ENCODE measurements at regions of chr4 and their contacts with region 1.

Region 1: DNA sequence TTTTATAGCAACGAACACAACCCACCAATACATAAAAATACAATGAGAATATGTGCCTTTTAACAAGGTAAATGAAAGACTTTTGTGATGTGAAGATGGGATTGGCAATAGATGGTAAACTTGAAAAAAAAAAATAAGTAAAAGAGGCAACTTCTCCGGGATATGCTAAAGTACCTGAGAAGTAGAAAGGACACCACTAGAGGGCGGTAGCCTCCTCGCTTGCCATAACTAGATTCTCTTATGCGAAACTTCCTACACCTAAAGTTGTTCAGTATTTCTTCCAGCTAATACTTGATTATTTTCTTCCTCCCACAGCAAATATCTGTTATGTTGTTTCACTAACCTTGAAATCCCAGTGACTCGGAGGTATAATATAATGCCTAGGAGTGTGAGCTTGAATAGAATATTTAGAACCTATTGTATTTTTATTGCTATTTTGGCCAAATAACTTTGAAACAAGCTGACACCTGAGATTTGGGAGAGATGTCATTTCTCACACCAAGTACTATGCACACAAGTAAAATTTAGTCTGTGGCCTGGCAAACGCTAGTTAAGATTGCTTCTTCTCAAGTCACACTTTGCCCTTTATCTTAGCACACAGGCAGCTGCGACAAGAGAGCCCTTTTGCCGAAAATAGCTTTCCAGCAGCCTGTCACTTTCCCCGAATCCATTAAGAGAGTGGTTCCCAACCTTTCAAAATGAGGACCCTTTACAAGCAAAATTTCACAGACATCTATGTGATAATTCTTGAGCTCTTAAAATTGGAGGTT is 44.9 kb upstream of the PDLIM5 start:
- DNase-seq: peak in 4 of 5 donors; percentile 68 to 79 (median 74)
- ATAC-seq: peak; percentile 31 to 48 (median 42)
- H3K4me3 ChIP-seq: peak overlapping the region in 4 of 12 donors; percentile 4 to 25 (median 16)
- H3K27ac ChIP-seq: peak overlapping the region; percentile 65 to 94 (median 83)
- H3K4me1 ChIP-seq: peaks cover 0 to 56% (median 15%) of the 10 kb centered on the region in 12 donors
- H3K27me3 ChIP-seq: no peaks in the 10 kb centered on the region
- CTCF ChIP-seq: peak; percentile 84 to 96 (median 90)
- POLR2A ChIP-seq: no peak

Region 2: DNA sequence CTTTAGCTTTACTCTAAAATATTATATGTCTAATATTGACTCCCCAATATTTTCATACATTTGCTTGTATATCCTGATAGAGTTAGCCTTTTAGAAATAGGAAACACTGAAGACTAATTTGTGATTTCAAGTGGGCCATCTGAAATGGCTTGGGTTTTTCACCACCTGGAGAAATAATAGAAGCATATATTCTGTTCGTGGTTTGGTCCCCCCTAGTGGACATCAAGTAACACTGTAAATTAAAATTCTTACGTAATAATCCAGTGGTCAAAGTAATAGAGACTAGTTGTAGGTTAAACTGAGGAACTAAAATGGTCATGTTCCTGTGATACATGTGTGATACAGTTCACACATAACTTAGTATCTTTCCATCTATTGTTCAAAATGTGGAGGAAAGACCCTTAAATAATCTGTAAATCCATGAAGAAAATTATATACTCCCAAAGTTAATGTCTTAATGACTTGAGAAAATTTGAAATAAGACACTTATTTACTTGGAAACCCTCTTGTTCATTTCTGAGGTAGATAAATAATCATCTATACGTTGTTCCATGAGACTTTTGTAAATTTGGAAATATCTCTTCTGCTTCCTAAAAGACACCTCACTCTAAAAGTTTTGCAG is 279.0 kb before region 1 on chr4:
- intact Hi-C with region 1: no loop called
- DNase-seq: no peak
- ATAC-seq: no peak
- H3K4me3 ChIP-seq: no peak overlapping the region
- H3K27ac ChIP-seq: no peak overlapping the region
- H3K4me1 ChIP-seq: no peaks in the 10 kb centered on the region
- H3K27me3 ChIP-seq: no peaks in the 10 kb centered on the region
- CTCF ChIP-seq: peak in 11 of 12 donors; percentile 32 to 66 (median 49)
- POLR2A ChIP-seq: no peak

Region 3: GRCh38 chr4:94436512-94436911 is 29.7 kb after region 1 on chr4:
- intact Hi-C with region 1: no loop called
- DNase-seq: no peak
- ATAC-seq: no peak
- H3K4me3 ChIP-seq: no peak overlapping the region
- H3K27ac ChIP-seq: no peak overlapping the region
- H3K4me1 ChIP-seq: peaks cover 0 to 4% (median 0%) of the 10 kb centered on the region in 12 donors
- H3K27me3 ChIP-seq: no peaks in the 10 kb centered on the region
- CTCF ChIP-seq: no peak
- POLR2A ChIP-seq: no peak

Region 4: GRCh38 chr4:94457692-94458106 is 50.8 kb after region 1 on chr4:
- intact Hi-C with region 1: loop called in 8 of 10 experiments (anchors 2 to 5 kb)
- DNase-seq: peak in 4 of 5 donors; percentile 50 to 70 (median 56)
- ATAC-seq: peak; percentile 80 to 92 (median 90)
- H3K4me3 ChIP-seq: peak overlapping the region in 9 of 12 donors; percentile 78 to 99 (median 95)
- H3K27ac ChIP-seq: peak overlapping the region; percentile 41 to 100 (median 98)
- H3K4me1 ChIP-seq: peaks cover 0 to 91% (median 36%) of the 10 kb centered on the region in 12 donors
- H3K27me3 ChIP-seq: no peaks in the 10 kb centered on the region
- CTCF ChIP-seq: no peak
- POLR2A ChIP-seq: peak in 1 of 2 donors; percentile 25

Region 5: GRCh38 chr4:94525993-94526728 is 119.3 kb after region 1 on chr4:
- intact Hi-C with region 1: loop called in 1 of 10 experiments (anchors 10 kb)
- DNase-seq: no peak
- ATAC-seq: peak in 1 of 4 donors; percentile 13
- H3K4me3 ChIP-seq: peak overlapping the region in 5 of 12 donors; percentile 0 to 30 (median 8)
- H3K27ac ChIP-seq: peak overlapping the region in 11 of 12 donors; percentile 25 to 77 (median 67)
- H3K4me1 ChIP-seq: peaks cover 3 to 99% (median 82%) of the 10 kb centered on the region in 12 donors
- H3K27me3 ChIP-seq: no peaks in the 10 kb centered on the region
- CTCF ChIP-seq: no peak
- POLR2A ChIP-seq: no peak

Region 6: GRCh38 chr4:94583914-94584641 is 177.2 kb after region 1 on chr4:
- intact Hi-C with region 1: loop called in 1 of 10 experiments (anchors 5 kb)
- DNase-seq: no peak
- ATAC-seq: peak in 2 of 4 donors; percentile 33 to 38
- H3K4me3 ChIP-seq: no peak overlapping the region
- H3K27ac ChIP-seq: peak overlapping the region in 4 of 12 donors; percentile 1 to 37 (median 32)
- H3K4me1 ChIP-seq: peaks cover 0 to 46% (median 16%) of the 10 kb centered on the region in 12 donors
- H3K27me3 ChIP-seq: no peaks in the 10 kb centered on the region
- CTCF ChIP-seq: no peak
- POLR2A ChIP-seq: no peak

Region 7: DNA sequence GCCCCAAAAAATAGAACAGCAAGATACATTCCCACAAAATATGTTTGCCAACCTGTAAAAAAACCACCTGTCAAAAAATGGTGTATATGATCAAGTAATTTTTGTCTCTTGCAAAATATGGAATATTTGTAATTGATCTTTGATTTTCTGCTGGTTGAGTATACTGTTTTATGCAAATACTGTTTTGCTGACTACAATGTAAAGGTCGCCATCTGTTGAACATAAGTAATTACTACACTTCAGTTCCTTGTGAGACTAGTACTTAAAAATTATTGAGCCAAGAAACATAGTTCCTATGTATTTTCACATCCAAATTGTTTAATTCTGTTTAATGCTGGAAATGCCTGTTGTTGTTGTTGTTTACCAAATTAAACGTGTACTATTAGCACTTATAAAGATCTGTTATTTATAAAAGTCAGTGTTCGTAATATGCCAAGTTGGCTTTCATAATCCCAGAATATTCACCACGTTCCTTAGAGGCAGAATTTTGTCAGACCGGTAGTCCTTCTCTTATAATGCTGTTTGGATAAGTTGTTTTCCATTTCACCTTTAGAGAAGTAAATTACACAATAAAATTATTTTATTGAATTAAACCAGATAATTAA is 189.1 kb after region 1 on chr4:
- intact Hi-C with region 1: loop called (anchors 1 to 5 kb)
- DNase-seq: no peak
- ATAC-seq: no peak
- H3K4me3 ChIP-seq: no peak overlapping the region
- H3K27ac ChIP-seq: peak overlapping the region in 2 of 12 donors; percentile 23 to 37
- H3K4me1 ChIP-seq: peaks cover 0 to 18% (median 10%) of the 10 kb centered on the region in 12 donors
- H3K27me3 ChIP-seq: no peaks in the 10 kb centered on the region
- CTCF ChIP-seq: peak; percentile 44 to 78 (median 60)
- POLR2A ChIP-seq: no peak

Measured in heart left ventricle (tissue), 16 donors.